AG04449 (cell line): ENCODE measurements at regions of chr12 and their contacts with region 1.

Region 1: DNA sequence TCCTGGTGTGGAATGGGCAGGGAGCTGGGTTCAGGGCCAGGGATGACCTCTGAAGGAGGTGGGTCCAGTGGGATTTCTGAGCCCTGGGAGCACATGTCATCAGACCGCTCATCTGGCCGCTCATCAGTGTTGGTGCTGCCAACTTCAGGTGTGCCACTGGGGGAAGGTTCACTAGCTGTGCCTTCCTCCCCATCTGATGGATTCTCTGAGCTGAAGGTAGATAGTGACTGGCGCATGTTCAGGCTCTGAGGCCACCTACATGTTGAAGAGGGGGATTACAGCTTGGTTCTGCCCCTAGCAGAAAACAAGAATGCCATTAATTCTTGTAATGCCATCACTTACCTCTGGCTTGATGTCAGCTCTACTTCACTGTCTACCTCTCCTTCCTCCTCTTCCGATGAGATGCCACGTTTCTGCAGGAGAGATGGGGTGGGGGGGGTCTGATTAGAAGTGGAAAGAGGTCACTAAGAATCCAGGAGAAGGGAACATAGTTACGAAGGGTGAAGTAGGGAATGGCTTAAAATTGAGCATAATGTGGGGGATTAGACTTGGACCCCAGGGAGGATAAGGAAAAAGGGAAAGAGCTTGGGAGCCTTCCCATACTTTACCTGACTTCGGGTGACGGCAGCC is 17.2 kb downstream of the MAP3K12 start:
- DNase-seq: no peak
- H3K4me3 ChIP-seq: no peak overlapping the region
- CTCF ChIP-seq: peak; percentile 12

Region 2: GRCh38 chr12:53492830-53493611 is 10.9 kb after region 1 on chr12:
- CTCF ChIA-PET with region 1: interaction called, 19 read pairs
- POLR2A ChIA-PET with region 1: interaction called, 17 read pairs
- DNase-seq: no peak
- H3K4me3 ChIP-seq: peak overlapping the region; percentile 61
- CTCF ChIP-seq: no peak

Region 3: DNA sequence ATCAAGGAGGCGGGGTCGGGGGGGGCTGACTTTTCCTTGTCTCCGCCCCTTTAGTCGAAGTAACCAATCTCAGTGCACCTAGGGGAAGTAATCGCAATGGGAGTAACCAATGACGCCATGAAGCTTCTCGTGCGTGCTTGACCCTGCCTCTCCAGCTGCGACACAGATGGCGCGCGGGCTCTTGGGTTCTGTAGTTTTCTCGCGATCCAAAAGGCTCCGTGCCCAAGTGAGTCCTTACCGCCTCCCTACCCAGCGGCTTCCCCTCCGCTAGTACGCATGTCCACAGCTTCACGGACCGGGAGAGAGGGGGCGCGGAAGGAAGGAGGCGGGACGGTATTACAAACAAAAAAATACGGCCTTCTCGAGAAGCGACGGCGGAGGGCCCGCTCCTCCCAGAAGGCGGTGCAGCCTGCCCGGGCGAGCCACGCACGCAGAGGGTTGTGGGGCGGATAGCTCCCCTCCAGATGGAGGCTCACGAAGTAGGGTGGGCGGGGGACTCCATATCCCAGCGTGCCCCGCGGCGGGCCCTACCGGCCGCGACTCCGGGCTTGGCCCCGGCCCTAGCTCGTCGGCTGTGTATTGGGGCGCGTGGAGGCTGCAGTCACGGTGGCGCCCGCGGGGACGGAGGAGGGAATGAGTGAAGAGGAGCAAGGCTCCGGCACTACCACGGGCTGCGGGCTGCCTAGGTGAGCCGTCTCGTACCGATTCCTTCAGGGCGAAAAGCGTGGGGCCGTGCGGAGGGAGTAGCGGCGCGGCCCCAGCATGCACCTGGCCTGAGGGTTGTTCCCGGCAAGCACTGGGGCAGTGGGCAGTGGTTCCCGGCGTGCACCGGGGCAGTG is 18.9 kb after region 1 on chr12 and contains the start of gene TARBP2:
- CTCF ChIA-PET with region 1: interaction called, 99 read pairs
- POLR2A ChIA-PET with region 1: interaction called, 11 read pairs
- DNase-seq: peak; percentile 98
- H3K4me3 ChIP-seq: peak within 1 kb of the TSS; percentile 83
- CTCF ChIP-seq: no peak

Region 4: DNA sequence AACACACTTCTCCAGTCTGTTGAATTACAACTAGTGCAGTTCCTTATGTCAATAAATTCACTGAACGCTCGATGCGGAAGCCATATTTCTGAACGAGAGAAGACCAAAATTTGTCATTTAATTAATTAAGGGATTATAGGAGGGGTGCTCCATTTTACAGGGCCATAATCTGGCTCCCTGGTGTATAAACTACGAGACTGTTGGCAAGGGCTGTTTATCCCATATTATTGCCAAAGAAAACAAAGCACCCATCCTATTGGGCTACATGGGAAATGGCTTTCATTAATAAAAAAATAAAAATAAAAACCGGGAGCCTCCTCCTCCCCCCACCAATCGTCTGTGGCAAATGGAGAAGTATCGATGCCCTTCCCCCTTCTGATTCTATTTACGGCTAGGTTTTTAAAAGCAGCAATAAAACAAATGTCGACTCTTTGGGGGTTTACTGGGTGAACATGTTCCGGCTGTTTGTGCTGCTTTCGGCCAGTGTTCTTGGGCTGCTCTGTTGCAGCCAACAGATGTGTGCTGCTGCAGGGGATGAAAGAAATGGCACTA is 119.3 kb after region 1 on chr12:
- CTCF ChIA-PET with region 1: no interaction called
- POLR2A ChIA-PET with region 1: no interaction called
- DNase-seq: no peak
- H3K4me3 ChIP-seq: no peak overlapping the region
- CTCF ChIP-seq: no peak